ENCODE measurements at regions of chr2 and their contacts with region 1.

Region 1: DNA sequence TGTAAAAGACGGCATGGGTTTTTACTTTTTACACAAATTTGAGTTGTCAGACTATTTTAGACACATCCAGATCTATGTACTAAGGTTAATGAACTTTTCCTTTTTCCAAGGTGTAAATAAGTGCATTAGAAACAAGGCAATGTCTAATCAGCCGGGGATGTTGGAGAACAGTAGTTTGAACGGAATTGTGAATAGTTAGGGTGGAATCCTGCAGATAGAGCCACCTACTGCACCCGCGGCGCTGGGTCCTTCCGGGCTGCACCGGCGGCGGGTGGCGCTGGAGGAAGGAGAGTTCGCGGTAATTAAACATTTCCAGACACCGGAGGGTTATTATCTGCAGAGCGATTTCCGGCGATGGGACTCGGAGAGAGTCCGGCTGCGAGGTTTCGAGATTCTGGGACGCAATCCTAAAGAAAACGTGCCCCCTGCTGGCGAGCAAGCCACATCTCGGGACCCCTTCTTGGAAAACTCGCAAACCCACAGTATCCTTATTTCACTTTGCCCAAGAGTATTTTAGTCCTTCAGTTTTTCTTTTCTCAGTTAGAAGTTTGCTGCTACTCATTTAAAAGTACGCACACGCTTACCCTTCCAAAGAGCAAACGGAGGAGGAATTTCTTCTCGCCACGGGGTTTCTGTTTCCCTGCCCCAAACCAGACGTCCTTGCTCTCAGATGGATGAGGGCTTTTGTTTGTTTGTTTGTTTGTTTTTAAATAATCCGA is 4.5 kb upstream of the OSR1 start:
- DNase-seq: peak; percentile 75 to 80
- H3K4me3 ChIP-seq: peak overlapping the region; percentile 72
- H3K27ac ChIP-seq: peak overlapping the region; percentile 24
- H3K4me1 ChIP-seq: peaks cover 7% of the 10 kb centered on the region; the same call in 1 of the 2 replicates
- H3K27me3 ChIP-seq: no peaks in the 10 kb centered on the region
- CTCF ChIP-seq: peak; percentile 92

Region 2: GRCh38 chr2:18387441-18388206 is 975.3 kb before region 1 on chr2:
- CTCF ChIA-PET with region 1: no interaction called
- POLR2A ChIA-PET with region 1: no interaction called
- intact Hi-C with region 1: loop called (anchors 1 kb)
- DNase-seq: peak; percentile 55 to 70
- H3K4me3 ChIP-seq: no peak overlapping the region
- H3K27ac ChIP-seq: no peak overlapping the region
- H3K4me1 ChIP-seq: no peaks in the 10 kb centered on the region
- H3K27me3 ChIP-seq: no peaks in the 10 kb centered on the region
- CTCF ChIP-seq: peak; percentile 98

Region 3: DNA sequence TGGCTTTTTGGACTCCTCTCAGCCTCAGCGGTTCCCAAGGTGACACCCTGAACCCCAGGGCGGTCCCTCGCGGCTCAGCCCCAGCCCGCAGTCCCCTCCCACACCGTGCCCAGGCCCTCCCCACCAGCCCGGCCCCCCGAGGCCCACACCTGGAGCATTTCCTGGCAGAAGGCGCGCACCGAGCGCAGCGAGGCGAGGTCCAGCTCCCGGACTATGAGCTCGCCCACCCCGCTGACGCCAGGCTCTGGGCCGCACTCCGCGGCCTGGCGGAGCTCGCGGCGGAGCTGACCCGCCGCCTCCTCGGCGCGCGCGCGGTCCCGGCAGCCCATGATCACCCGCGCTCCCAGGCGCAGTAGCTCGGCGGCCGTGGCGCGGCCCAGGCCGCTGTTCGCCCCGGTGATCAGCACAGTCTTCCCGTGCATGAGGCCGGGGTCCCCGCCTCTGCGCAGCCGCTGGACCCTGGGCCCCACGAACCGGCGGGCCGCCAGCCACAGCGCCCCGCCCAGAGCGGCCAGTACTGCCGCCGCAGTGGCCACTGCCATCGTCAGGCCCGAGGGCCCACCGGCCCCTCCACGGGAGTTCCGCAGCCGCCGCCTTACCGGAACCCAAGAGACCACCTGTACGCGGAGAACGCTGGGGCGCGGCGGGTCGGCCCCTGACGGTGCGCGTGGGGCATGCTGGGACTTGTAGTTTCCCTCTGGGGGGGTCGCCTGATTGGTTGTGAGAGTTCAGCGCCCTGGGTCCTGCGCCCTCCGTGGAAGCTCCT is 802.7 kb before region 1 on chr2 and contains the start of gene RDH14:
- CTCF ChIA-PET with region 1: no interaction called
- POLR2A ChIA-PET with region 1: no interaction called
- intact Hi-C with region 1: loop called (anchors 5 kb)
- DNase-seq: peak; percentile 80 to 90
- H3K4me3 ChIP-seq: peak within 1 kb of the TSS; percentile 73
- H3K27ac ChIP-seq: peak within 1 kb of the TSS; percentile 66
- H3K4me1 ChIP-seq: peaks cover 7% of the 10 kb centered on the region
- H3K27me3 ChIP-seq: no peaks in the 10 kb centered on the region
- CTCF ChIP-seq: no peak
- total RNA-seq, gene RDH14: 16.1 and 17.2 TPM in 2 replicates

Region 4: GRCh38 chr2:18883616-18884456 is 479.1 kb before region 1 on chr2:
- CTCF ChIA-PET with region 1: no interaction called
- POLR2A ChIA-PET with region 1: no interaction called
- intact Hi-C with region 1: loop called (anchors 1 kb)
- DNase-seq: peak in 1 of 2 experiments; percentile 16
- H3K4me3 ChIP-seq: no peak overlapping the region
- H3K27ac ChIP-seq: peak overlapping the region; percentile 1; the same call in 1 of the 2 replicates
- H3K4me1 ChIP-seq: peaks cover 11% of the 10 kb centered on the region
- H3K27me3 ChIP-seq: no peaks in the 10 kb centered on the region
- CTCF ChIP-seq: peak; percentile 60

Region 5: GRCh38 chr2:19312949-19313348 is 50.0 kb before region 1 on chr2:
- CTCF ChIA-PET with region 1: no interaction called
- POLR2A ChIA-PET with region 1: no interaction called
- intact Hi-C with region 1: no loop called
- DNase-seq: no peak
- H3K4me3 ChIP-seq: no peak overlapping the region
- H3K27ac ChIP-seq: no peak overlapping the region
- H3K4me1 ChIP-seq: no peaks in the 10 kb centered on the region
- H3K27me3 ChIP-seq: no peaks in the 10 kb centered on the region
- CTCF ChIP-seq: 0 out of 2 replicates have a peak, but pooled peaks have one; percentile 22

Region 6: DNA sequence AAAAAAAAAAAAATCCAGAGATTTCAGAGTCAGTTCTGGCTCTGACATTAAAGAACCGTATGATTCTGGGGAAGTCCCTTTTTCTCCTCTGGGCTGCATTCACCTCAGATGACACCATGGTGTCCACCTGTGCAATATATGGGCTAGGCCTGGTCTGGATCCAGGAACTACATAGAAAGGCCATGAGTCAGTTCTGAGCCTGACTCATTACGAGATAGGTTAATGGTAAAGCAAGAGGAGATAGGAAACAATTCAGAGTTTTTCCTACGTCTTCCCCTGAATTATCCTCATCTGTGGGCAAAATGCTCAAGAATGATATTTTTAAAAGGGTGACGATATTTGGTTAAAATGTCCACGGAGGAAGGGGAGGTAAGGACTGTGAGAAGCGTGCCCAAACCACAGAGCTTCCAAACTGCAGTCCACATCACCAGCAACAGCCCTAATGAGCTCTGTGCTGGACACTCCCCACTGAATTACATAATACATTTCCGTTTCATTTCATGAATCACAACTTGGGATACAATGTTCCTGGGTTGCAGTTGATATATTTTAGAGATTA is 175.6 kb after region 1 on chr2:
- CTCF ChIA-PET with region 1: no interaction called
- POLR2A ChIA-PET with region 1: interaction called, 8 read pairs
- intact Hi-C with region 1: loop called (anchors 5 kb)
- DNase-seq: peak; percentile 77 to 98
- H3K4me3 ChIP-seq: peak overlapping the region; percentile 41; the same call in 1 of the 2 replicates
- H3K27ac ChIP-seq: peak overlapping the region; percentile 97
- H3K4me1 ChIP-seq: peaks cover 70% of the 10 kb centered on the region
- H3K27me3 ChIP-seq: no peaks in the 10 kb centered on the region
- CTCF ChIP-seq: no peak

Region 7: GRCh38 chr2:19746611-19747309 is 383.8 kb after region 1 on chr2:
- CTCF ChIA-PET with region 1: no interaction called
- POLR2A ChIA-PET with region 1: no interaction called
- intact Hi-C with region 1: loop called (anchors 2 kb)
- DNase-seq: peak in 1 of 2 experiments; percentile 14
- H3K4me3 ChIP-seq: no peak overlapping the region
- H3K27ac ChIP-seq: no peak overlapping the region
- H3K4me1 ChIP-seq: no peaks in the 10 kb centered on the region
- H3K27me3 ChIP-seq: no peaks in the 10 kb centered on the region
- CTCF ChIP-seq: peak; percentile 60

Region 8: GRCh38 chr2:20231632-20232031 is 868.7 kb after region 1 on chr2:
- CTCF ChIA-PET with region 1: interaction called, 11 read pairs
- POLR2A ChIA-PET with region 1: no interaction called
- intact Hi-C with region 1: no loop called
- DNase-seq: peak; percentile 96 to 100
- H3K4me3 ChIP-seq: no peak overlapping the region; the same call in 1 of the 2 replicates
- H3K27ac ChIP-seq: peak overlapping the region; percentile 99
- H3K4me1 ChIP-seq: peaks cover 61% of the 10 kb centered on the region
- H3K27me3 ChIP-seq: no peaks in the 10 kb centered on the region
- CTCF ChIP-seq: no peak